ENCODE measurements at regions of chr4 and their contacts with region 1.

Region 1: GRCh38 chr4:37452952-37453280 is 208.4 kb downstream of the NWD2 start:
- DNase-seq: peak; percentile 12 to 70 (median 30)
- ATAC-seq: peak; percentile 89
- H3K4me3 ChIP-seq: no peak overlapping the region
- H3K27ac ChIP-seq: no peak overlapping the region
- H3K4me1 ChIP-seq: peaks cover 0 to 9% of the 10 kb centered on the region in 2 experiments; a peak in 2 of 5 replicates
- H3K27me3 ChIP-seq: peaks cover 7 to 9% of the 10 kb centered on the region in 2 experiments; a peak in 4 of 5 replicates
- CTCF ChIP-seq: peak; percentile 54 to 71 (median 64)
- EP300 ChIP-seq: no peak
- POLR2A ChIP-seq: no peak
- RAD21 ChIP-seq: peak; percentile 47 to 77; a peak in 3 of 4 replicates

Region 2: DNA sequence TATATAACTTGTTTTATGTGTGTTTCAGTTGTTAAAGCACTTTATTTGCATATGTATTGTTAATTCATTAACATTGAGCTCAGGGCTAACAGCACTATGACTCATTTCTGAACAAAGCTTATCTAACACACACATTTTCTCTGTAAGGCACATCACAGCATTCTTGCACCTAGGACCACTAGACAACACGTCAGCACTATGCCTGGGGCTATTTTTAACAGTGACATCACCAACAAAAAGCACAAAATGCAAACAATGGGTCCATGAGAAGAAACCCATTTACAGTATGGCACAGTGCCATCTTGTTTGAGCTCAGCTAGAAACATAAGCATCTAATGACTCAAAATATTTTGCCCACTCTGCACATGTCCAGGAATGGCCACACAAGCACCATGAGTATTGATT is 108.9 kb after region 1 on chr4:
- CTCF ChIA-PET with region 1: interaction called, 10 read pairs
- POLR2A ChIA-PET with region 1: no interaction called
- in situ Hi-C with region 1: no loop called
- intact Hi-C with region 1: loop called (anchors 1 kb)
- DNase-seq: peak; percentile 38 to 59 (median 44)
- ATAC-seq: peak; percentile 44; the same call in 2 of the 3 replicates
- H3K4me3 ChIP-seq: no peak overlapping the region
- H3K27ac ChIP-seq: no peak overlapping the region
- H3K4me1 ChIP-seq: peaks cover 0 to 2% of the 10 kb centered on the region in 2 experiments; a peak in 2 of 5 replicates
- H3K27me3 ChIP-seq: no peaks in the 10 kb centered on the region
- CTCF ChIP-seq: no peak
- EP300 ChIP-seq: peak; percentile 36; the same call in 1 of the 2 replicates
- POLR2A ChIP-seq: no peak
- RAD21 ChIP-seq: no peak

Measured in K562 (cell line).